ENCODE measurements at regions of chr5 and their contacts with region 1.

Region 1: DNA sequence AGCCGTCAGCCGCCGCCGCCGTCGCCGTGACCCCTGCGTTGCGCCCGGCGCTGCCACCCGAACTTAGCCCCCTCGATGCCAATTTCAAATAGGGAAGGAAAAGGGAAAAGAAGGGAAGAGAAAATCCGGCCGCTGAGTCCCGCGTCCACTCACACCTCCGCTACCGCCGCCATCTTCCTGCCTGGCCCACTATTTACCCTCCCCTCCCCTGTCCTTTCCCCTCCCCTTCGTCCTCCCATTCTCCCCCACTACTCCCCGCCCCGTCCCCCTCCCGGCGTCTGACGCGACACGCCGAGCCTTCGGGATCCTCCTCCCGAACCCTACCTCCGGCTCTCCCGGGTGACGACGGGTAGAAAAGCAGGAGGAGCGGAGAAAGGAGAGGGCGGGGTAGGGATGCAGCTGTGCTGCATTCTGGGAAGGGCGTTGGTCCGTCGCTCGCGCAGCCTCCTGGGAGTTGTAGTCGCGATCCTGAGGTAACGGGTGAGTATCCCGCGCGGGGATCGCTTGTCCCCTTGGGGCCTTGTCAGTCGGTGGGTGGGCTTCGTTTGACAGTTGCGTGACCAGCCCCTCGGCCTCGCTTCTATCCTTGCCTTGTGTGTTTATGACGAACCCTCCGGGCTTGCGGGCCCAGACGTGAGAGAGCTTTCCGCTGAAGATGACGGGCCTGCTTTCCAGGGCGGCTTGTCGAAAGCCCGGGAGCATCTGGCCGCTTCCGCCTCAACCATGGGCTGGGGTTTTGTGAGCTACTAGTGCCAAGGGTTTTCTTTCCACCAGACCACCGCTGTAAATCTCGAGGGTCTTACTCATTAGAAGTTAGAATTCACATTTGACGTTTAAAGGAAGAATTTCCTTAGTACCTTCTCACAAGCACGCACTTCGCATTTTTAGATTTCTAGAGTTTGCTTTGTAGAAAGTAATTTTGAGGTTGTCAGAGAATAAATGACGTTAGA is at the starts of genes CERT1 and POLK:
- DNase-seq: peak; percentile 85
- ATAC-seq: peak; percentile 90
- H3K4me3 Mint-ChIP-seq: peak within 1 kb of the TSS; percentile 95
- H3K27ac Mint-ChIP-seq: peak within 1 kb of the TSS; percentile 95
- H3K4me1 Mint-ChIP-seq: peaks cover 70% of the 10 kb centered on the region
- H3K27me3 Mint-ChIP-seq: no peaks in the 10 kb centered on the region
- CTCF ChIP-seq: no peak
- total RNA-seq, gene CERT1: 39.1 and 49.5 TPM in 2 replicates
- total RNA-seq, gene POLK: 29.0 and 34.0 TPM in 2 replicates

Region 2: GRCh38 chr5:74684900-74685851 is 826.5 kb before region 1 on chr5 and contains the start of gene HEXB:
- CTCF ChIA-PET with region 1: no interaction called
- POLR2A ChIA-PET with region 1: no interaction called
- intact Hi-C with region 1: loop called (anchors 5 kb)
- DNase-seq: peak; percentile 77
- ATAC-seq: peak; percentile 86
- H3K4me3 Mint-ChIP-seq: peak within 1 kb of the TSS; percentile 81
- H3K27ac Mint-ChIP-seq: peak within 1 kb of the TSS; percentile 63
- H3K4me1 Mint-ChIP-seq: peaks cover 18% of the 10 kb centered on the region
- H3K27me3 Mint-ChIP-seq: no peaks in the 10 kb centered on the region
- CTCF ChIP-seq: no peak
- total RNA-seq, gene HEXB: 34.5 and 43.2 TPM in 2 replicates

Region 3: DNA sequence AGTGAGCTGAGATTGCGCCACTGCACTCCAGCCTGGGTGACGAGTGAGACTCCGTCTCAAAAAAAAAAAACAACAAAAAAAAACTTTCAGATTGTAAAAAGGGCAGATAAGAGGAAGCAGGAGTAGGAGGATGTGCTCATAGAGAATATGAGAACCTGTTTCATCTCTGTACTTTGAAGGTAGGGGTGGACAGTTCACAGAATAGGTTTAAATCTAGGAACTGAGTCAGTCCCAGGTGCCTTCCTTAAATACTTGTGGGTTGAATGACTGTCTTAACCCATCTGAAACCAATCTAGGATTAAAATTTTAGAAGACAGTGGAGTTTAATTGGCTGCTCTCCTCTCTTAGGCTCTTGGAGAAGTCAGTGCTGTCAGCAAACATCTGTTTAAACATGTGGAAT is 12.4 kb after region 1 on chr5:
- CTCF ChIA-PET with region 1: interaction called, 7 read pairs
- POLR2A ChIA-PET with region 1: interaction called, 14 read pairs
- intact Hi-C with region 1: loop called (anchors 1 kb)
- DNase-seq: no peak
- ATAC-seq: peak; percentile 80
- H3K4me3 Mint-ChIP-seq: peak overlapping the region; percentile 58
- H3K27ac Mint-ChIP-seq: peak overlapping the region; percentile 76
- H3K4me1 Mint-ChIP-seq: peaks cover 43% of the 10 kb centered on the region
- H3K27me3 Mint-ChIP-seq: no peaks in the 10 kb centered on the region
- CTCF ChIP-seq: no peak

Region 4: DNA sequence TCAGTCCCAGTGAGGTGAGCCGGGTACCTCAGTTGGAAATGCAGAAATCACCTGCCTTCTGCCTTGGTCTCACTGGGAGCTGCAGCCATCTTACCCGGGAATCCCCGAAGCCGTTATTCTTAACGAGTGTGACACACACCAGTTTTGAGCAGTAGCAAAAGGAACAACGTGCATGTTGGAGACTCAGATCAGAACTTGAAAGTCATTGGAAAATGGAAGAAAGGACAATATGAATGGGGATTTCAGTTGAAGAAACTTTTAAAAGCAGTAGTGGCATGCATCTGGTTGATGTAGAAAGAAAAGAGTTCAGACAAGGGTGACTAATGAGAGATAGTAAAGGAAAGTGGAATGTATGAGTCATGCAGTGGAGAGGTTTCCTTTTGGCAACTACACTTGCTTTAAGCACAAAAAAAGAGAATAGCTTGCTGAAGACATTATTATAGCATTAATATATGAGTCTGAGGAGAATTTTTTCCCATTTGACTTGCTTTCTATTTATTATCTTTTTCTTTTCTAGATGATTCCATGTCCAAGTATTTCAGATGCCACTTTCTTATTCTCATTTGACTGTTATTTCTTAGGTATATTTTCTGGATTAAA is 55.1 kb after region 1 on chr5:
- CTCF ChIA-PET with region 1: no interaction called
- POLR2A ChIA-PET with region 1: interaction called, 6 read pairs
- intact Hi-C with region 1: loop called (anchors 1 kb)
- DNase-seq: no peak
- ATAC-seq: peak; percentile 83
- H3K4me3 Mint-ChIP-seq: peak overlapping the region; percentile 76
- H3K27ac Mint-ChIP-seq: peak overlapping the region; percentile 88
- H3K4me1 Mint-ChIP-seq: peaks cover 46% of the 10 kb centered on the region
- H3K27me3 Mint-ChIP-seq: no peaks in the 10 kb centered on the region
- CTCF ChIP-seq: no peak

Region 5: DNA sequence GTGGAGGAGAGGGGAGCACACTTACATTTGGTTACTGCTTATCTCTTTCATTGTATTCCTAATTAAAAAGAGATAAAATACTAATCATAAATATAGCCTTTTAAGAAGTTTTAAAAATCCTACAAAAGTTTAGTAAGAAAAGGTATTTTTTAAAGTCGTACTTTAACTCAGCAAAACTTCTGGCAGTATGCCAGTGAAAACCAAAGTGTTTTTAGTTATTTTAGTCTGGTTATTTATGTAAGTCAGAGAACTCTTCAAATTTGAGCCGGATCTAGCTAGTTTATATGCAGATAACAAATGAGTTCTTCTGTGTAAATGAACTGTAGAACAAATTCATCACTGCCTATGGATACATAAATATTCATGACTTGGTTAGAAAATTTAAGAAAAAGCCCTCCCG is 63.1 kb after region 1 on chr5:
- CTCF ChIA-PET with region 1: interaction called, 3 read pairs
- POLR2A ChIA-PET with region 1: interaction called, 16 read pairs
- intact Hi-C with region 1: loop called (anchors 1 kb)
- DNase-seq: no peak
- ATAC-seq: no peak
- H3K4me3 Mint-ChIP-seq: peak overlapping the region; percentile 76
- H3K27ac Mint-ChIP-seq: peak overlapping the region; percentile 86
- H3K4me1 Mint-ChIP-seq: peaks cover 37% of the 10 kb centered on the region
- H3K27me3 Mint-ChIP-seq: no peaks in the 10 kb centered on the region
- CTCF ChIP-seq: no peak

Region 6: DNA sequence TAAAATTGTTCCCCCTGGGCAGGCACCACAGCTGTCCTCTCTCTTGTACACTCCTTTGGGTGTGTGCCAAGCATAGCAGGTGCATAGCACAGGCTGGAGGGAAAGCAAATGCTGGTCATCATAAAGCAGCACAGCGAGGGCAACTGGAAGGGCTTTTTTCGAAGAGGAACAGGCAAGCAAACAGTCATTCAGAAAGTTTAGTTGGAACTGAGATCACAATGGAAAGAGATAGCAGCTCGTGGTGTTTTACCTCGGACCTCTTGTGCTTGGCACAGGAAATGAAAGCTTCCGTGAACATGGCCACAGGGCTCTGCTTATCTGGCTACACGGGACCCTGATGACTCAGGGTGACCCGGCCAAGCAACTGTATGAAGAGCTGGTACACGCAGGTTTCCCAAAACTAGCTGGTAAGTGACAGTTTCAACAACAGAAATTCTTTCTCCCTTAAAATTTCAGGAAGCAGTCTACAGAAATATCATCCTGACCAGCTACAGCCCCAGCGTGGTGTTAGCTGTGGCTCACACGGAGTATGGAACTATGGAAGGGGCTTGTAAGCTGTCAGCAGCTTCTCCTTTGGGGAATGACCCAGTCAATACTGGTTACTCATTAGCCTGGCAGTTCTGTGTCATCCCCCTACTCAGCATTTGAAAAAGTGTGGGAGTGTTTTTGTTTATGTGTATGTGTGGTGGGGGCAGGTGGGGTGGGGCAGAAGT is 157.4 kb after region 1 on chr5:
- CTCF ChIA-PET with region 1: no interaction called
- POLR2A ChIA-PET with region 1: interaction called, 3 read pairs
- intact Hi-C with region 1: loop called (anchors 5 kb)
- DNase-seq: no peak
- ATAC-seq: peak; percentile 94
- H3K4me3 Mint-ChIP-seq: peak overlapping the region; percentile 80
- H3K27ac Mint-ChIP-seq: peak overlapping the region; percentile 73
- H3K4me1 Mint-ChIP-seq: peaks cover 16% of the 10 kb centered on the region
- H3K27me3 Mint-ChIP-seq: no peaks in the 10 kb centered on the region
- CTCF ChIP-seq: no peak

Measured in activated B cell treated with CpG ODN at 0.5 μM for 24 hours (primary cell).